AG04450 (cell line): ENCODE measurements at regions of chr10 and their contacts with region 1.

Region 1: DNA sequence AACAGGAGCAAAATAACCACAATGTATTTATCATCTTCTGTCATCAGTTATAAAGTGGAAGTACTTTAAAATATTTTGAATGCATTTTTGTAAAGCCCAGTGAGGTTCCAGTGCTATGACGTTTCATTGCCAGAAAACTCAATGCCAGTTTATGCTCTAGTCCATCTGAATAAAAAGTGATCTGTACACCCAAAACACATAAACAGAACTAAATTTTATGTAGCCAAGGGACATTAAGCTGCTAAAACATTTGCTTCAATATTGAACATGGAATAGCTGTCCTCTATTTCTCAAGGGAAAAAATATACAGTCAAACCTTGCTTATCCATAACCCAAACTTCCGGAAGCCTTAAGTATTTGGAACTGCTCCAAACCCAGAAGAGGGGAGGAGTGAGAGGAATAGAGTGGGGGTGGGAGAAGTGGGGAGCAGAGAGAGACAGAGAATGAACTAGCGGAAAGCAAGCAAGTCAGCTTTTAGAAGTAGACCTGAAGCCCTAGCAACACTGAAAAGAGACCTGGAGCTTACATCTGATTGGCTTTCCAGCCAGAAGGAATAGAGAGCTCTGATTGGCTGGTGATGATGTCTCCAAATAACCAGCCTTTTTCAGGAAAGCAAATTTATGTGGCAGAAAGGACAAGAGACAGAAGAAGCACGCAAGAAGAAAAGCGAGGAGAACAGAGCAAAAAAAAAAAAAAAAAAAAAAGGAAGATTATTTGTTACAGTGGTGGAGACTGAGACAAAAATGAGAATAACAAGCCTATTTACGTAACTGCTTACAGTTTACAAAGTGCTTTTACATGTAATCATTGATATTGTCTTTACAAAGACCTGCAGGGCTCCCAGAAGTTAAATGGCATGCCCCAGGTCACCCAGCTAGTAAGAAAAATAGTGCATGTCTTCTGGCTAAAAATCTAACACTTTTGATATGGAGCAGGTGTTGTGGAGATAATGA is 196.0 kb downstream of the RNLS start:
- DNase-seq: peak; percentile 44
- H3K4me3 ChIP-seq: no peak overlapping the region
- H3K27ac ChIP-seq: no peak overlapping the region
- H3K27me3 ChIP-seq: no peaks in the 10 kb centered on the region
- CTCF ChIP-seq: no peak

Region 2: DNA sequence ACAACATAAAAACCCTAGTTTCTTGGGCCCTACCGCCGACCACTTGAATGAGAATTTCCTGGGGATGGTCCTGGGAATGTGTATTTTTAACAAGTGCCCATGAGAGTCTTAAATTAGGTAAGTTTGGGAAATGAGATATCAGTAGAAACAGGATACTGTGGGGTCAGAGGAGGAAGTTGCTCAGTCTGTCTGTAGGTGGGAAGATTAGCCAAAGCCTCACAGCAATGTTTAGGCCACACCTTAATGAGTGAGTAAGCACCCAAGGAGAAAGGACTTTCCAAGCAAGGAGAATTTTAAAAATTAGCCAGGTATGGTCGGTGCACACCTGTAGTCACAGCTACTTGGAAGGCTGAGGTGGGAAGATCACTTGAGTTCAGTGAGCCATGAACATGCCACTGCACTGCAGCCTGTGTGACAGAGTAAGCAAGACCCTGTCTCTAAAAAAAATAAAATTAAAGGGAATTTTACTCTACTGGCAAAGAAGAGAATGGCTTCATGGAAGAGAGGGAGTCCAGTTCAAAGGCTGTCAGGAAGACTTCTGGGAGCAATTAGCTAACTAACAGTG is 695.5 kb before region 1 on chr10:
- CTCF ChIA-PET with region 1: interaction called, 11 read pairs
- POLR2A ChIA-PET with region 1: no interaction called
- DNase-seq: no peak
- H3K4me3 ChIP-seq: no peak overlapping the region
- H3K27ac ChIP-seq: no peak overlapping the region
- H3K27me3 ChIP-seq: no peaks in the 10 kb centered on the region
- CTCF ChIP-seq: no peak

Region 3: DNA sequence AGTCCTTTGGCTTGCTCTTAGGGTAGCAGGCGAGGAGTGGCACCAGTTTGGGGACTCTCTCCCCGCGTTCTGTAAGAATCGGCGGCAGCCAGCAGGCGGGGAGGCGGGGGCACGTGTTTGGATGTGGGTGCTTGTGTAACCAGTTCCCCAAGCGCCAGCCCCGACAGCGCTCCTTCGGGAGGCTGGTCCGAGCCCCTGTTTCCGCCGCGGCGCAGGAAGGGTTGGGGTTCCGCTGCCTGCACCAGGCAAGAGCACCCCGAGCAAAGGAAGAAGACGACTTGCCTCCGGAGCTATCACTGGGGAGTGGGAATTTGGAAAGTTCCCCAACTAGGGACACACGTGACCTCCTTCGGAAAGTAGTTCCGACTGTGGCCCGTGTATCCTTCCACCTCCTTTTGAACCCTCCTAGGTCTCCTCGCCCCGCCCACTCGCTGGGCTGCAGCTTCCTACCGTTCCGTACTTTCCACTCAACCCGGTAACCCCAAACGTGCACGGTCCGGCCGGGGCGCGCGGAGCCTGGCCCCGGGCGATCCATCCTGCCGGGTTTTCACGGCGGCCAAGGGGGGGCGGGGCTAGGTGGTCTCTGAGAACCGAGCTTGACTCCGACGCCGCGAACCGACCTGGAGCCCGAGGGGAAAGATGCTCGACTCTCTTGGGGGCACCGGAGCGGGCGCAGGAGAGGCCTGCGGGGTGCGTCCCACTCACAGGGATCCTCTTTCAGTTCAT is 525.0 kb before region 1 on chr10:
- CTCF ChIA-PET with region 1: interaction called, 22 read pairs
- POLR2A ChIA-PET with region 1: interaction called, 23 read pairs
- DNase-seq: peak; percentile 97
- H3K4me3 ChIP-seq: peak overlapping the region; percentile 91
- H3K27ac ChIP-seq: peak overlapping the region; percentile 84
- H3K27me3 ChIP-seq: no peaks in the 10 kb centered on the region
- CTCF ChIP-seq: 0 out of 2 replicates have a peak, but pooled peaks have one; percentile 4

Region 4: DNA sequence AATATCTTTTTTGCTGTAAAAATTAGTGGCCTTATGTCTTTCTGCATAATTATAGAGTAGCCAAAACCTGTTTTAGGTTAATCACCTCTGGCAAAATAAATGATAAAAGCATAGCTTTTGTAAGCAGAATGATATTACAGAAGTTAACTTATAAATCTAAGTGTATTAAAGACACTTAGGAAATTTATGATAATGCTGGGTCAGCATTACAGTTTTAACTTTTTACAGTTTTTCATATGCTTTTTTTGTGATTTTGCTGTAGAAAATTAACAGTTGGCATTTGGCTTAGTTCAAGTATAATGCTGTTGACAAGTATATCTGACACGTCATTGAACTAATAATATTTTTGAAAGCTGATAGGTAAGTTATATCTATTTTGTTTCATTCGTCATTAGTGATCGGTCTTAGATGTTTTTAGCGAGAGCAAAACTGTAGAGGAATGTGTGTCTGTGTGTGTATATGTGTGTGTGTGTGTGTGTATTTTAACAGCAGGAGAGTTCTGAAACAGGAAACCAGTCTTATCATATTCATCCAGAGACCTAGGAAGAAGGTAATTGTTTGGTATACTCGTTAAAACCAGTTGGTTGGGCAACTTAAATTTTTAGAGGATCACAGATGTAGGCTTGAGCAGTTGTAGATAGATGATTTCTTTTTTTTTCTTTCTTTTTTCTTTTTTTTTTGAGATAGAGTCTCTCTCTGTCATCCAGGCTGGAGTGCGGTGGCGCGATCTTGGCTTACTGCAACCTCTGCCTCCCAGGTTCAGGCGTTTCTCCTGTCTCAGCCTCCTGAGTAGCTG is 508.2 kb before region 1 on chr10:
- CTCF ChIA-PET with region 1: interaction called, 11 read pairs
- POLR2A ChIA-PET with region 1: no interaction called
- DNase-seq: no peak
- H3K4me3 ChIP-seq: no peak overlapping the region
- H3K27ac ChIP-seq: no peak overlapping the region
- H3K27me3 ChIP-seq: no peaks in the 10 kb centered on the region
- CTCF ChIP-seq: no peak

Region 5: DNA sequence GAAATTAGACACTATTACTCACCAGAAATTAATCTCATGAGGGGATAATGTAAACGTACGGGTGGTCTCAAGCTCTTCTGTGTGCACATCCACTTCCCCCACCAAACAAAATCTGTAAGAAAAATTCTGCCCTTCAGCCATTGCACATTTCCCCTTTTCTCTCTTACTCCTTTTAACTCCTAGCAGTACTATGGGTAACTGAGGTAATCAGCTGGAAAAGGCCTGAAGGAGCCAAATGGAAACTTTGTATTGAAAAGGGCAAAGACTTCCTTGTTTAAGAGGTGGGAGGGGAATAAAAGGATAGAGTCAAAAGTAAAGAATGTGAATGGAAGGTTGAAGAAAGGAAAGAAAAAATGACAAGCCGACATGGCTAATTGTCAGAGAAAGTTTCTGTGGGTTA is 77.7 kb before region 1 on chr10:
- CTCF ChIA-PET with region 1: no interaction called
- POLR2A ChIA-PET with region 1: no interaction called
- DNase-seq: no peak
- H3K4me3 ChIP-seq: no peak overlapping the region
- H3K27ac ChIP-seq: no peak overlapping the region
- H3K27me3 ChIP-seq: no peaks in the 10 kb centered on the region
- CTCF ChIP-seq: no peak

Region 6: GRCh38 chr10:88404133-88404532 is 17.0 kb after region 1 on chr10:
- CTCF ChIA-PET with region 1: interaction called, 11 read pairs
- POLR2A ChIA-PET with region 1: no interaction called
- DNase-seq: no peak
- H3K4me3 ChIP-seq: no peak overlapping the region
- H3K27ac ChIP-seq: no peak overlapping the region
- H3K27me3 ChIP-seq: no peaks in the 10 kb centered on the region
- CTCF ChIP-seq: no peak

Region 7: DNA sequence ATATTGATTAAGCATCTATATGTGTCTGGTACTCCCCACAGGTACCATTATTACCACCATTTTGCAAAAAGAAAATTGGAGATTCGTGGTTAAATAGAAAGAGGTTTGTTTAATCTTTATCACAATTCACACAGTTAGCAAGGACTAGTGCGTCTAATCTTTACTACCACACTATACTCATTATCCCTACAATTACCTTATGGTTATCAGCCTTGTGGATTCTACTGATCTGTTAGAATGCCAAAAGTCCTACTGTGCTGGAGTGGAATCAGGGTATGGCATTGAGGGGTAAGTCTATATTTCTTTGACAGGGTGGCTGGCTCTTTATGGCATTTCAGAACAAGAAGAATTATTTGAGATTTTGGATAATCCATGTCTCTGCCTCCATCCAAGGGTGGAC is 39.9 kb after region 1 on chr10:
- CTCF ChIA-PET with region 1: no interaction called
- POLR2A ChIA-PET with region 1: no interaction called
- DNase-seq: no peak
- H3K4me3 ChIP-seq: no peak overlapping the region
- H3K27ac ChIP-seq: no peak overlapping the region
- H3K27me3 ChIP-seq: no peaks in the 10 kb centered on the region
- CTCF ChIP-seq: no peak